Naive thymus-derived CD4-positive, alpha-beta T cell (primary cell): ENCODE measurements at regions of chr4 and their contacts with region 1.

Region 1: DNA sequence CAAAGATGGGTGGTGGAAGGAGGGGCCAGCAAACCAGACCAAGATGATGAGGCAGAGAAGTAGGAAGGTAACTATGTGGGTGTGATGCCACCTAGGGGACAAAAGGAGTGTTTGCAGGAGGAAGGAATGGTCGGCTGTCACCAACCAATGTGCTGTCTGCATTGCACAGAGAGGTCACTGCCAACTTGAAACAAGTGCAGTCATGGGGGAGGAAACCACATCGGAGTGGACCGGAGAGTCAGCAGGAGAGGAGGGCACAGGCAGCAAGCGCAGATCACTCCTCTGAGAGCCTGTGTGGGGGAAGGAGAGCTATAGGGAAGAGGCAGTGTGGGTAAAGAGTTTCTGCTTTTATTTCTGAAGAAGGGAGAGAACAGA is 38.5 kb upstream of the FGFBP2 start:
- DNase-seq: peak in 8 of 9 donors; percentile 13 to 59 (median 47)
- ATAC-seq: peak; percentile 95
- H3K4me3 ChIP-seq: no peak overlapping the region
- H3K4me3 Mint-ChIP-seq: no peak overlapping the region
- H3K27ac ChIP-seq: no peak overlapping the region
- H3K27ac Mint-ChIP-seq: no peak overlapping the region
- H3K4me1 ChIP-seq: no peaks in the 10 kb centered on the region
- H3K4me1 Mint-ChIP-seq: no peaks in the 10 kb centered on the region
- H3K27me3 ChIP-seq: no peaks in the 10 kb centered on the region
- H3K27me3 Mint-ChIP-seq: peaks cover 0 to 8% (median 3%) of the 10 kb centered on the region in 5 donors

Region 2: GRCh38 chr4:15231265-15232091 is 770.0 kb before region 1 on chr4:
- CTCF ChIA-PET with region 1: no interaction called
- POLR2A ChIA-PET with region 1: no interaction called
- intact Hi-C with region 1: loop called in 1 of 2 experiments (anchors 1 kb)
- DNase-seq: peak; percentile 45 to 72 (median 69)
- ATAC-seq: peak; percentile 86
- H3K4me3 ChIP-seq: no peak overlapping the region
- H3K4me3 Mint-ChIP-seq: no peak overlapping the region
- H3K27ac ChIP-seq: no peak overlapping the region
- H3K27ac Mint-ChIP-seq: peak overlapping the region in 4 of 9 donors; percentile 11 to 68 (median 44)
- H3K4me1 ChIP-seq: peaks cover 0 to 27% of the 10 kb centered on the region in 2 donors
- H3K4me1 Mint-ChIP-seq: peaks cover 24 to 39% (median 35%) of the 10 kb centered on the region in 7 donors
- H3K27me3 ChIP-seq: no peaks in the 10 kb centered on the region
- H3K27me3 Mint-ChIP-seq: peaks cover 0 to 3% (median 0%) of the 10 kb centered on the region in 5 donors

Region 3: GRCh38 chr4:15238720-15239119 is 762.8 kb before region 1 on chr4:
- CTCF ChIA-PET with region 1: no interaction called
- POLR2A ChIA-PET with region 1: no interaction called
- intact Hi-C with region 1: loop called in 1 of 2 experiments (anchors 2 kb)
- DNase-seq: peak in 5 of 9 donors; percentile 24 to 43 (median 32)
- ATAC-seq: peak; percentile 80
- H3K4me3 ChIP-seq: no peak overlapping the region
- H3K4me3 Mint-ChIP-seq: no peak overlapping the region
- H3K27ac ChIP-seq: no peak overlapping the region
- H3K27ac Mint-ChIP-seq: no peak overlapping the region
- H3K4me1 ChIP-seq: peaks cover 0 to 8% of the 10 kb centered on the region in 2 donors
- H3K4me1 Mint-ChIP-seq: peaks cover 9 to 14% (median 11%) of the 10 kb centered on the region in 7 donors
- H3K27me3 ChIP-seq: no peaks in the 10 kb centered on the region
- H3K27me3 Mint-ChIP-seq: no peaks in the 10 kb centered on the region

Region 4: GRCh38 chr4:15479089-15479912 is 522.2 kb before region 1 on chr4:
- CTCF ChIA-PET with region 1: no interaction called
- POLR2A ChIA-PET with region 1: no interaction called
- intact Hi-C with region 1: loop called in 1 of 2 experiments (anchors 1 kb)
- DNase-seq: peak in 1 of 9 donors; percentile 4
- ATAC-seq: no peak
- H3K4me3 ChIP-seq: no peak overlapping the region
- H3K4me3 Mint-ChIP-seq: no peak overlapping the region
- H3K27ac ChIP-seq: no peak overlapping the region
- H3K27ac Mint-ChIP-seq: no peak overlapping the region
- H3K4me1 ChIP-seq: no peaks in the 10 kb centered on the region
- H3K4me1 Mint-ChIP-seq: no peaks in the 10 kb centered on the region
- H3K27me3 ChIP-seq: no peaks in the 10 kb centered on the region
- H3K27me3 Mint-ChIP-seq: peaks cover 0 to 6% (median 0%) of the 10 kb centered on the region in 5 donors

Region 5: GRCh38 chr4:15805583-15806517 is 195.6 kb before region 1 on chr4:
- CTCF ChIA-PET with region 1: interaction called, 4 read pairs
- POLR2A ChIA-PET with region 1: no interaction called
- intact Hi-C with region 1: loop called (anchors 1 kb)
- DNase-seq: peak in 7 of 9 donors; percentile 37 to 64 (median 52)
- ATAC-seq: peak; percentile 80
- H3K4me3 ChIP-seq: no peak overlapping the region
- H3K4me3 Mint-ChIP-seq: no peak overlapping the region
- H3K27ac ChIP-seq: no peak overlapping the region
- H3K27ac Mint-ChIP-seq: peak overlapping the region in 3 of 9 donors; percentile 21 to 78 (median 60)
- H3K4me1 ChIP-seq: peaks cover 0 to 4% of the 10 kb centered on the region in 2 donors
- H3K4me1 Mint-ChIP-seq: peaks cover 26 to 76% (median 43%) of the 10 kb centered on the region in 7 donors
- H3K27me3 ChIP-seq: no peaks in the 10 kb centered on the region
- H3K27me3 Mint-ChIP-seq: no peaks in the 10 kb centered on the region

Region 6: DNA sequence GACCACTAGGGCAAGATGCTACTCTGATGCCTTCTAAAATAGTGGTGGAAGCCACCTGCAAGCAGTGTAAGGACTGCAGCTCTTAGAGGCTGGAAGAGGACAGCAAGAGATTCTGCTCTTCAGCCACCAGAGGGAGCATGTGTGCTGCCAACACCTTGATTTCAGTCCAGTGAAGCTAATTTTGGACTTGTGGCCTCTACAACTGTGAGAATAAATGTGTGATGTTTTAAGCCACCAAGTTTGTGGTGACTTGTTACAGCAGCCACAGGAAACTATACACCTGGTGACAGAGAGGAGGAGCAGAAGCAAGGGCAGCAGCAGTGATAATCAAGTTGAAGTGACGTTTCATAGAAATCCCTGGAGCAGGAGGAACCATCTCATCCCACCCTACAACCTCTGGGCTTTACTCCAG is 118.8 kb before region 1 on chr4:
- CTCF ChIA-PET with region 1: interaction called, 10 read pairs
- POLR2A ChIA-PET with region 1: no interaction called
- intact Hi-C with region 1: loop called (anchors 1 kb)
- DNase-seq: peak in 7 of 9 donors; percentile 22 to 52 (median 41)
- ATAC-seq: peak; percentile 89
- H3K4me3 ChIP-seq: no peak overlapping the region
- H3K4me3 Mint-ChIP-seq: no peak overlapping the region
- H3K27ac ChIP-seq: no peak overlapping the region
- H3K27ac Mint-ChIP-seq: peak overlapping the region in 1 of 9 donors; percentile 2
- H3K4me1 ChIP-seq: no peaks in the 10 kb centered on the region
- H3K4me1 Mint-ChIP-seq: peaks cover 0 to 13% (median 0%) of the 10 kb centered on the region in 7 donors
- H3K27me3 ChIP-seq: no peaks in the 10 kb centered on the region
- H3K27me3 Mint-ChIP-seq: peaks cover 0 to 20% (median 4%) of the 10 kb centered on the region in 5 donors

Region 7: GRCh38 chr4:15963001-15963451 is 38.4 kb before region 1 on chr4 and contains the start of gene FGFBP2:
- CTCF ChIA-PET with region 1: interaction called, 5 read pairs
- POLR2A ChIA-PET with region 1: no interaction called
- intact Hi-C with region 1: loop called (anchors 1 kb)
- DNase-seq: peak; percentile 10 to 73 (median 57)
- ATAC-seq: peak; percentile 78
- H3K4me3 ChIP-seq: no peak within 1 kb of the TSS
- H3K4me3 Mint-ChIP-seq: peak within 1 kb of the TSS in 9 of 10 donors; percentile 33 to 83 (median 56)
- H3K27ac ChIP-seq: no peak within 1 kb of the TSS
- H3K27ac Mint-ChIP-seq: peak within 1 kb of the TSS in 5 of 9 donors; percentile 43 to 59 (median 51)
- H3K4me1 ChIP-seq: peaks cover 5 to 15% of the 10 kb centered on the region in 2 donors
- H3K4me1 Mint-ChIP-seq: peaks cover 6 to 26% (median 18%) of the 10 kb centered on the region in 7 donors
- H3K27me3 ChIP-seq: no peaks in the 10 kb centered on the region
- H3K27me3 Mint-ChIP-seq: peaks cover 6 to 14% (median 8%) of the 10 kb centered on the region in 5 donors
- total RNA-seq, gene FGFBP2: 1.2 to 54.8 (median 4.5) TPM